Heart left ventricle (tissue), 16 donors: ENCODE measurements at regions of chr1 and their contacts with region 1.

Region 1: DNA sequence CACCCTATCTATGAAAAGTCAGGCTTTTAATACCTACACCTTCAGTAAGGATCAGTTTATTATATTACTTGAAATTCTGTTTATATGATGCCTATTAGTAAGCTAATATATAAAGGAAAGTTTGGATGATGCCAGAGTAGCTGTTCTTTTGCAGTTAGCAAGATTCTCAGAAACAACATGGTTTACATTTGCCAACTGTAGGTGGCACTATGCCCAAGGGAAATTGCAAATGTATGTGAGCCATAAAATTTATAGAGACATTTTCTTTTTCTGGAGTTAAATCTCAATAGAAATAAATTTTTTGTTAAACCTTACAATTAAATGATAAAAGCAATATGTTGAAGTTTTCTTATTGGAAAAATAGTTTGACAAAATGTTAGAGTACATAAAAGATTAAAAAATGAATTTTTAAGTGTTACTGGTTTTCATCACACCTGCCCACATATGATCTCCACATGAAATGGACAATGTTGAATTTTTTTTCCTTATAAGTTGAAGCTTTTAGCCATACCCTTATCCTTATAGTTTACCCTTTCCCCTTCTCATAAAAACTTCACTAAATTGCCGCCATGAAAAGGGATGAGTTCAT is 32.1 kb upstream of the EPHX4 start:
- DNase-seq: peak in 1 of 5 donors; percentile 7
- ATAC-seq: no peak
- H3K4me3 ChIP-seq: no peak overlapping the region
- H3K27ac ChIP-seq: no peak overlapping the region
- H3K4me1 ChIP-seq: no peaks in the 10 kb centered on the region
- H3K27me3 ChIP-seq: no peaks in the 10 kb centered on the region
- CTCF ChIP-seq: peak in 11 of 12 donors; percentile 10 to 60 (median 42)
- POLR2A ChIP-seq: no peak

Region 2: GRCh38 chr1:92168657-92169056 is 171.0 kb after region 1 on chr1:
- intact Hi-C with region 1: no loop called
- DNase-seq: no peak
- ATAC-seq: no peak
- H3K4me3 ChIP-seq: no peak overlapping the region
- H3K27ac ChIP-seq: no peak overlapping the region
- H3K4me1 ChIP-seq: no peaks in the 10 kb centered on the region
- H3K27me3 ChIP-seq: no peaks in the 10 kb centered on the region
- CTCF ChIP-seq: no peak
- POLR2A ChIP-seq: no peak

Region 3: DNA sequence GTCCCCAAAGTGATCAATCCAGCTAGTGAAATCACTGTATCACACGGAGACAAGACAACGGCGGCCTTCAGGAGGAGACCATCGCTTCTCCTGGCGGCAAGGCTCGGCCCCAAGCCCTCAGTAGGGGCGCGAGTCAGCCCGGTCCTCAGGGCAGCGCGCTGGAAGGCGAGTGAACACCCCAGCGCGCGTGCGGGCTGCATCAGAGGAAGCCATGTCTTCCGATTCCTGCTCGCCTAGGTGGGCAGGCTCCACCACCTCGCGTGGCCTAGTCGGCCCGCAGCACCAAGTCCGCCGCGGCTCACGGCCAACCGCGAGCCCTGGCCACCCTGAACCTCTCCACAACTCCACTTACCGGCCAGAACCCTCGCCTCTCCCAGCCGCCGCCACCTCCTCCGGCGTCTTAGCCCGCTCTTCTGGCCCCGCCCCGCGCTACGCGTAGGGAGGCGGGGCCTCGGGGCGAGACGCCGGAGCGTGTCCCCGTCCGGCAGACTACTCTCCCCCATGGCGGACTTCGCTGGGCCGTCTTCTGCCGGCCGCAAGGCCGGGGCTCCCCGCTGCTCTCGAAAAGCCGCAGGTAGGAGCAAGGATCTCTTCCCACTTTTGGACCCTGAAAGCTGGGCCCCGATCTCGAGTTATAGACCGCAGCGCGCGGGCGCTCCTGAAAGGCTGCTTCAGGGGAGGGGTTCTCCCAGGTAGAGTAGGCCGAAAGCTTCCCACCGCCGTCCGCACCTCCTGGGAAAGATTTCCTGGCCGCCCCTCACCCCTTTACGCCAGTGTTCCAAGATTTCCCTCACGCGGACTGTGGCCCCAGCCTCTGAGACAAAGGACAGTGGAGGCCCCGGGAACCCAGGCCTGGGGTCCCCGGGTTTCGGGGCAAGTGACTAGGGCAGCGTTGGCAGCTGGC is 301.1 kb after region 1 on chr1 and contains the starts of genes GLMN and RPAP2:
- intact Hi-C with region 1: loop called in 6 of 10 experiments (anchors 5 to 10 kb)
- DNase-seq: peak; percentile 79 to 91 (median 85)
- ATAC-seq: peak; percentile 98 to 100 (median 100)
- H3K4me3 ChIP-seq: peak within 1 kb of the TSS; percentile 59 to 97 (median 86)
- H3K27ac ChIP-seq: peak within 1 kb of the TSS; percentile 85 to 95 (median 92)
- H3K4me1 ChIP-seq: peaks cover 0 to 23% (median 13%) of the 10 kb centered on the region in 12 donors
- H3K27me3 ChIP-seq: no peaks in the 10 kb centered on the region
- CTCF ChIP-seq: peak in 5 of 12 donors; percentile 5 to 36 (median 12)
- POLR2A ChIP-seq: peak; percentile 76 to 92
- total RNA-seq, gene GLMN: 3.0 to 7.2 (median 5.6) TPM
- total RNA-seq, gene RPAP2: 6.7 to 27.7 (median 23.3) TPM